Lower leg skin (tissue), 4 donors: ENCODE measurements at regions of chr3 and their contacts with region 1.

Region 1: DNA sequence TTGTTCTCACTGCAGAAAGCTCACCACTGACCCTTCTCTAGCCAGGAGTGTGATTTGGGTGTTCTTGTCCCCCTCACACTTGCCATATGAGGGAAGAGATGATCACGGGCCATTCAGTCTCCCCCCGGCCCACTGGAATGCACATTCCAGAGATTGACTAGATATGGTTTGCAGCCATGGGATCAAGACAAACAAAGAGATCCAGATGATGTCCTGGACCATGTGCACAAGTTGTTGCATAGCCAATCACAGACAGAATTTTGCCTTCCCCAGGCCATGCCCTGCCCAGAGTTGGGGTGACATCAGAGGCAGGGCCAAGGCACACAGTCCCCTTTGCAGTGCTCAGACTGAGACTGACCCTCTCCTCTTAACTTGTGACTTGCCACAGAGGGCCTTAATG is 14.8 kb downstream of the MUC13 start:
- DNase-seq: no peak
- H3K4me3 ChIP-seq: no peak overlapping the region
- CTCF ChIP-seq: no peak
- POLR2A ChIP-seq: no peak

Region 2: GRCh38 chr3:124951511-124952281 is 31.9 kb after region 1 on chr3:
- intact Hi-C with region 1: no loop called
- DNase-seq: no peak
- H3K4me3 ChIP-seq: no peak overlapping the region
- CTCF ChIP-seq: no peak
- POLR2A ChIP-seq: no peak

Region 3: DNA sequence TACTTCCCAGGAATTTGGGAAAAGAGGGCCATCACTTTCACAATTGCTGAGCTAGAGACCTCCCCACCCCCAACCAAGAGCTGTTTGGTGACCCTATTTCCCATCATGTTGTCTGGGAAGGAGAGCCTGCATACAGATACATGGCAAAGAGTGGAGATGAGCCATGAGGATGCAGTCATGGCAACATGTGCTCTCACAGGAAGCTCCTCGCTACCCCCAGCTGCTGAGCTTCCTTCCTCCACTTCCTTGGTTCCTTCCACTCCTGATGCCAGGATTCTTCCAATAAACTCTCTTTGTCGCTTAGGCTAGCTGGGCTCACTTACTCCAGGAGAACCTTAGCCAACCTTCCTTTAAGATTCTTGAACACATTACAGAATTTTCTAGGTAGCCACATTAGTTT is 63.1 kb after region 1 on chr3:
- intact Hi-C with region 1: loop called (anchors 2 kb)
- DNase-seq: no peak
- H3K4me3 ChIP-seq: no peak overlapping the region
- CTCF ChIP-seq: no peak
- POLR2A ChIP-seq: no peak

Region 4: DNA sequence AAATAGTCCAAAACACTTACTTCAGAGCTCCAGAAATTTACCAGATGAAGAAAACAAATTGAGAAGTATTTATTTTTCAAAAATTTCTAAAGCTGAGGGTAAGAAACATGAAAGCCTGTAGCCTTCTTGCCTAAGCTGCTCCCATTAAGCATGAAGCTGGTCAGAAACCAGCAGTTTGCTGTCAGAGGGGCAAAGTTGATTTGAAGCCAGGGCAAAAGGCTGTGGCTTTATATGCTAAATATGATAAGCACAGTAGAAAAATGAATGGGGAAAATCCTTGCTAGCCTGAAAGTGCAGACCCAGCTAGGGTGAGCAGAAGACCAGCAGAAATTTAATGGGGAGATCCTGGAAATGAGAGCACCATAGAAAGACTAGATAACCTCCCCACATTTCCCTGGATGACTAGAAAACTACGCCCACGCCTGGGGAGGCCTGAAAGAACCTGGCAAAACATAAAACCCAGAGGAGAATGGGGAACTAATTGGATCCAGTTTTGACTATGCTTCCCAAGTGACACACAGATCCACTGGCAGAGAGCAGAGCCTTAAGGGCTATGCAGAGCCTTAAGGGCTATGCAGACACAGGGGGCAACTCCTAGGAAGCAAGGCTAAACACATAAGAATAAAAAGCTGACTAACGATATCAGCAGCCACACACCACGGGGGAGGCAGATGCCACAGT is 179.0 kb after region 1 on chr3:
- intact Hi-C with region 1: no loop called
- DNase-seq: no peak
- H3K4me3 ChIP-seq: no peak overlapping the region
- CTCF ChIP-seq: no peak
- POLR2A ChIP-seq: no peak